Activated CD4-positive, alpha-beta T cell treated with anti-CD3 and anti-CD28 coated beads for 36 hours (primary cell): ENCODE measurements at regions of chr5 and their contacts with region 1.

Region 1: GRCh38 chr5:149317281-149318048 is 27.8 kb upstream of the GRPEL2 start:
- DNase-seq: peak; percentile 52
- ATAC-seq: peak; percentile 74
- H3K4me3 Mint-ChIP-seq: no peak overlapping the region
- H3K27ac Mint-ChIP-seq: no peak overlapping the region
- H3K4me1 Mint-ChIP-seq: no peaks in the 10 kb centered on the region
- H3K27me3 Mint-ChIP-seq: no peaks in the 10 kb centered on the region

Region 2: GRCh38 chr5:149205625-149206523 is 111.6 kb before region 1 on chr5:
- CTCF ChIA-PET with region 1: no interaction called
- POLR2A ChIA-PET with region 1: no interaction called
- intact Hi-C with region 1: no loop called
- DNase-seq: no peak
- ATAC-seq: no peak
- H3K4me3 Mint-ChIP-seq: no peak overlapping the region
- H3K27ac Mint-ChIP-seq: no peak overlapping the region
- H3K4me1 Mint-ChIP-seq: no peaks in the 10 kb centered on the region
- H3K27me3 Mint-ChIP-seq: no peaks in the 10 kb centered on the region

Region 3: GRCh38 chr5:149374286-149374685 is 56.8 kb after region 1 on chr5:
- CTCF ChIA-PET with region 1: interaction called, 22 read pairs
- POLR2A ChIA-PET with region 1: no interaction called
- intact Hi-C with region 1: loop called (anchors 1 kb)
- DNase-seq: no peak
- ATAC-seq: no peak
- H3K4me3 Mint-ChIP-seq: no peak overlapping the region
- H3K27ac Mint-ChIP-seq: no peak overlapping the region
- H3K4me1 Mint-ChIP-seq: no peaks in the 10 kb centered on the region
- H3K27me3 Mint-ChIP-seq: no peaks in the 10 kb centered on the region